OCI-LY7 (cell line): ENCODE measurements at regions of chr13 and their contacts with region 1.

Region 1: GRCh38 chr13:77565635-77566034 is 30.1 kb downstream of the SCEL start:
- DNase-seq: peak; percentile 39
- H3K4me3 ChIP-seq: no peak overlapping the region
- H3K27ac ChIP-seq: no peak overlapping the region
- H3K4me1 ChIP-seq: no peaks in the 10 kb centered on the region
- CTCF ChIP-seq: peak; percentile 84

Region 2: GRCh38 chr13:77492982-77493381 is 72.7 kb before region 1 on chr13:
- CTCF ChIA-PET with region 1: interaction called, 3 read pairs
- POLR2A ChIA-PET with region 1: no interaction called
- intact Hi-C with region 1: loop called (anchors 2 kb)
- DNase-seq: peak; percentile 30
- H3K4me3 ChIP-seq: no peak overlapping the region
- H3K27ac ChIP-seq: no peak overlapping the region
- H3K4me1 ChIP-seq: no peaks in the 10 kb centered on the region
- CTCF ChIP-seq: peak; percentile 75